ENCODE measurements at regions of chr3 and their contacts with region 1.

Region 1: DNA sequence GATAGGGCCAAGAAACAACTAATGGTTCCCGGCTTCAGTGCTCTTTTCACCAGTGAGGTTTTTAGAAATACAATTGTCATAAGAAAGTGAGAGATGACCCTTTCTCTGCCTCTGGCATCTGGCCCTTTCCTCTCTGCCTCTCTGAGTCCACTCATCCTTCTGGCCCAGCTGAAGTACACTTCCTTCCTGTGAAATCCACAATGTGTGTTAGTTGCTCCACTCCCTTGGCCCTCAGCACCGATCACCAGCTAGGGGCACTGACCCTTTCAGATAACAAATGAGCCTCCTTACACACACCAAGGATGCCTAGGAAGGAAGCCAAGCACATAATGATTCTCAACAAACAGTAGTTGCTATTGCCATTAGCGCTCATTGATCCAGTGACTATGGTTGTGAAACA is 2.9 kb upstream of the CAV3 start:
- DNase-seq: no peak

Region 2: GRCh38 chr3:8678751-8679150 is 51.9 kb before region 1 on chr3:
- CTCF ChIA-PET with region 1: no interaction called
- POLR2A ChIA-PET with region 1: no interaction called
- DNase-seq: no peak

Region 3: DNA sequence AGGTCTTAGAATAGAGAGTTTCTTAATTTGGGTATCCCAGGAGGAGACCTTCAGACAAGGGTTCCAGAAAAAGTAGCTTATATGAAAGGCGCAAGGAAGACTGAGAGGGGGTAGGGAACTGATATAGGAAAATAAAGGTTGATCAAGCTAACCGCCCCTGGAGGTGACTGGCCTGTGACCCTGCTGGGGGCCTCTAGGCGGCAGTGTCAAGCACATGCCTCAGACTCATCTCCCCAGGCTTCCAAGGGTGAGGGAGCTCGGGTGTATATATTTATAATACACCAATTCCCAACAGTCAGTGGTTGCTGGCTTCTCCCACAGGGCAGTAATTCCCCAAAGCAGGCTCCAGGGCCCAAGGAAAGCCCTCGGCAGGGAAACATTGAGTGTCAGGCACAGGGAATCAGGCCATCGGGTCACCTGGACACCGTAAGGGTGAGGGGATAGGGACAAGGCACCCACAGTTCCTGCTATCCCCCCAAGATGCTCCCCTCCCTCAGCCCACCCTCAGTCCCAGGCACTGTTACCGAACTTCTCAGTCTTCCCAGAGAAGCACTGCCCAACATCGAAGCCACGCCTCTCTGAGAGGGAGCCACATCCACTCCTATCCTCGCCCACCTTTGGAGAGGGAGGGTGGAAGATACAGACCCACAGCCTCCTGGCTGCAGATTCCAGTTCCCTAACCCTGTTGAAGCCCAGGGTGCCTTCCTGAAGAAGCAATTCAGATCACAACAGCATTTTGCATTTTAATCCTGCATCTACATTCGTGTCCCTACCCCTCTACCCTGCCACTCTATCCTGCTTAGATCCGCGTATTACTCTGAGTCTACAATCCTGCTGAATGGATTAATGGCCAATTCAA is 16.5 kb before region 1 on chr3:
- CTCF ChIA-PET with region 1: interaction called, 10 read pairs
- POLR2A ChIA-PET with region 1: no interaction called
- DNase-seq: peak; percentile 37

Region 4: DNA sequence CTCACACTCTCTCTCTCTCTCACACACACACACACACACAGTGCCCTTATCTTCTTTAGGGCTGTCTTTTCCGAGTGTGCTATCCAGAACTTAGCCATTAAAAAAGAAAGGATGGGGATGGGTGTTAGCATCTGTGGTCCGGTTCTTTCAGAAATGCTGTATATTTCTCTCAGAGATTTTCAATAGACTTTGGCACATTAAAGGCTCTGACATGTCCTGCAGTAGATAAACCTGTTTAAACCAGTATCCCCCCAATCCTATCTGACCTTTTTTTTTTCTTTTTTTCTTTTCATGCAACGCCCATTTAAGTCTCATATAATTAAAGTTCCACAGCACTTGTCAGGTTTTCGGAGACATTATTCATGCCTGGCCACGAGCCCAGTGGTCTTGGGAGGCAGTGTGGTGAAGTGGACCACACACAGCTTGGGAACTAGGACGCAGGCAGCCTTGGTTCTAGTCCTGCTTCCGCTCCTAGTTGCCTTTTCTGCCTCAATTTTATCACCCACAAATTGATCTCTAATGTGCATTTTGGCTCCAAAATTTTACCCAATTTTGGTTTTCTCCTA is 16.2 kb after region 1 on chr3:
- CTCF ChIA-PET with region 1: no interaction called
- POLR2A ChIA-PET with region 1: no interaction called
- DNase-seq: no peak